Activated CD4-positive, alpha-beta T cell treated with anti-CD3 and anti-CD28 coated beads for 36 hours (primary cell): ENCODE measurements at regions of chr1 and their contacts with region 1.

Region 1: DNA sequence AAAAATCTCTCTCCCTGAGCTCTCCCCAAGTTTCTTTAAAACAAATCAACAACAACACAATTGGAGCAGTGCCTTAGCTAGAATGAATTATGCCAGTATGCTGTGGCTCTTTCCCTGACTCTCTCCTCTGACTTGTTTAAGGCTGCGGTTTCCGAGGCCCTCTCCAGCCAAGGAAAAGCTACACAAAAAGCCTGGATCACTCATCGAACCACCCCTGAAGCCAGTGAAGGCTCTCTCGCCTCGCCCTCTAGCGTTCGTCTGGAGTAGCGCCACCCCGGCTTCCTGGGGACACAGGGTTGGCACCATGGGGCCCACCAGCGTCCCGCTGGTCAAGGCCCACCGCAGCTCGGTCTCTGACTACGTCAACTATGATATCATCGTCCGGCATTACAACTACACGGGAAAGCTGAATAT is 1.9 kb downstream of the S1PR1 start:
- DNase-seq: peak; percentile 95
- ATAC-seq: peak; percentile 30
- H3K4me3 Mint-ChIP-seq: peak overlapping the region; percentile 89
- H3K27ac Mint-ChIP-seq: peak overlapping the region; percentile 99
- H3K4me1 Mint-ChIP-seq: peaks cover 51% of the 10 kb centered on the region
- H3K27me3 Mint-ChIP-seq: no peaks in the 10 kb centered on the region

Region 2: DNA sequence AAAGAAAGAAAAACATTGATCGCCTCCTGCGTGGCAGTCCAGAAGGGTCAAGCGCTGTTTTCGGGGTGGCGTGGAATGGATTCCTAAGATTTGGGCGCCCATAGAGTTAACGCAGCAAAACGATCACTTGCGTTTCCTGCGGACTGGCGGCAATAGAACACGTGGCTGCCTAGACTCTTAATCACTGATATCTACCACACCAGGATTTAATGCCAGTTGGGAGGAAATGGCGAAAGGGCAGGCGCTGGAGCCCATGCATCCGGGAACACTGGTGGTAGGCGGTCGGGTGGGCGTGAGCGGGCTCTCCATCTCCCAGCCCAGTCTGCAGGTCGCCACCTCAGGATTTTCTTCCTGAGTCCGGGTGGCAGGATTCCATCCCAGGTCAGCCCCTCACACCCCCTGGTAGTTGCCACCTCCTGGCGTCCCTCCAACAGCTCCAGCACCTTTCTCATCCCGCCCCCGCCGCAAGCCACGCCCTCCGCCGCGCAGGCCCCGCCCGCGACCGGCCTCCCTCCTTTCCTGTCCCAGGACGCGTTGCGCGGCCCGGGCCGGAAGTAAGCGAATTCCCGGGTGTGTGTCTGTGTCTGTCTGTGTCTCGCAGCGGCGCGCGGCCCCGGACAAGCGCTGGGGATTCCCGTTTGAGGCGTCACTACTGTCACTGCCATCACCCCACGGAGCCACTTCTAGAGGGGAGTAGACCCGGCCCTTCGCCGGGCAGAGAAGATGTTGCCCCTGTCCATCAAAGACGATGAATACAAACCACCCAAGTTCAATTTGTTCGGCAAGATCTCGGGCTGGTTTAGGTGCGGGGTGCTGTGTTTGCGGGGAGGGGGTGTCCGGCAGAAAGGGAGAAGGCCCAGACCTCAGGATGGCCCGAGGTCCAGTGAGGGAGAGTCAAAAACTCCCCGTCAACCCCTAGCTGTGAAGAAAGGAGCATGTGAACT is 342.9 kb before region 1 on chr1 and contains the start of gene SLC30A7:
- CTCF ChIA-PET with region 1: no interaction called
- POLR2A ChIA-PET with region 1: interaction called, 3 read pairs
- intact Hi-C with region 1: loop called (anchors 1 to 2 kb)
- DNase-seq: peak; percentile 98
- ATAC-seq: peak; percentile 81
- H3K4me3 Mint-ChIP-seq: peak within 1 kb of the TSS; percentile 100
- H3K27ac Mint-ChIP-seq: peak within 1 kb of the TSS; percentile 100
- H3K4me1 Mint-ChIP-seq: peaks cover 44% of the 10 kb centered on the region
- H3K27me3 Mint-ChIP-seq: no peaks in the 10 kb centered on the region
- total RNA-seq, gene SLC30A7: 33.2 to 34.6 TPM

Region 3: GRCh38 chr1:101002551-101002950 is 236.1 kb before region 1 on chr1:
- CTCF ChIA-PET with region 1: no interaction called
- POLR2A ChIA-PET with region 1: no interaction called
- intact Hi-C with region 1: loop called in 1 of 2 experiments (anchors 5 kb)
- DNase-seq: no peak
- ATAC-seq: no peak
- H3K4me3 Mint-ChIP-seq: no peak overlapping the region
- H3K27ac Mint-ChIP-seq: no peak overlapping the region
- H3K4me1 Mint-ChIP-seq: peaks cover 50% of the 10 kb centered on the region
- H3K27me3 Mint-ChIP-seq: no peaks in the 10 kb centered on the region

Region 4: GRCh38 chr1:101130673-101131072 is 108.0 kb before region 1 on chr1:
- CTCF ChIA-PET with region 1: interaction called, 28 read pairs
- POLR2A ChIA-PET with region 1: interaction called, 4 read pairs
- intact Hi-C with region 1: no loop called
- DNase-seq: no peak
- ATAC-seq: no peak
- H3K4me3 Mint-ChIP-seq: no peak overlapping the region
- H3K27ac Mint-ChIP-seq: no peak overlapping the region
- H3K4me1 Mint-ChIP-seq: peaks cover 68% of the 10 kb centered on the region
- H3K27me3 Mint-ChIP-seq: no peaks in the 10 kb centered on the region

Region 5: DNA sequence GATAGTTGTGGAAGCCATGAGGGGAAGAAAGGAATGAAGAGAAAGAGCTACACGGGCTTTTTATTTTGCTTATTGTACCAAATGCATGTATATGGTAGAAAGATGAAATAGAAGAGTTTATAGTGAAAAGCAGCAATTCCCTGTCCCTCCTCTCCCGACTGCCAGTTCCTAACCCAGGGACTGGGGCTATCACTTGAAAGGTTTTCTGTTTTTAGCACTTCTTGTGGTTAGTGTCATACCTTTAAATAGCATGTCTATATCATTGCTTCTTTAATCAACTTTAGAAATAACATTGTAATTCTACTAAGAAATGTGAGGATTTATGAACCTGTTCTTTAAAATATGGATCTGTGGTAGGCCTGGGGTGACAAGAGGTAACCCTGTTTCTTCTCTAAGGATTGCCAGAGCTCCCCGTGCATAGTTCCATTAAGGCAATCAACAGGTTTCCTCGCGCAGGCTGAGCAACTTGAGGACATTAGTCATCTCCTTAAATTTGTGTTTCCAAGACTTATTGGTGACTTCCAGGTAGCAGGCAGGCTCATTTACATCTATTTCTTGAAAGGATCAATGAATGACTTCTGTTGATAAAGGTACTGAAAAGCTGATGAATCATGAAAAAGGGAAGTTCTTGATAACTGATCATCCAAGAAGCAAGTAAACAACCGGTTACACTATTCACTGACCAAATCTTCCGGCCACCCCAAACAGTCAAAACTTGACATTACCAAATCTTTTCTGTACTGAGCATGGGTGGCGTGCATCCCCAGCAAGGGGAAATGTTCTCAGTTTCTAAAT is 39.6 kb before region 1 on chr1:
- CTCF ChIA-PET with region 1: interaction called, 14 read pairs
- POLR2A ChIA-PET with region 1: interaction called, 48 read pairs
- intact Hi-C with region 1: loop called (anchors 1 kb)
- DNase-seq: peak; percentile 79
- ATAC-seq: peak; percentile 86
- H3K4me3 Mint-ChIP-seq: no peak overlapping the region
- H3K27ac Mint-ChIP-seq: peak overlapping the region; percentile 85
- H3K4me1 Mint-ChIP-seq: peaks cover 35% of the 10 kb centered on the region
- H3K27me3 Mint-ChIP-seq: no peaks in the 10 kb centered on the region

Region 6: GRCh38 chr1:101282314-101283038 is 43.8 kb after region 1 on chr1:
- CTCF ChIA-PET with region 1: interaction called, 37 read pairs
- POLR2A ChIA-PET with region 1: interaction called, 3 read pairs
- intact Hi-C with region 1: loop called in 1 of 2 experiments (anchors 1 kb)
- DNase-seq: no peak
- ATAC-seq: no peak
- H3K4me3 Mint-ChIP-seq: no peak overlapping the region
- H3K27ac Mint-ChIP-seq: peak overlapping the region; percentile 95
- H3K4me1 Mint-ChIP-seq: peaks cover 93% of the 10 kb centered on the region
- H3K27me3 Mint-ChIP-seq: no peaks in the 10 kb centered on the region

Region 7: GRCh38 chr1:101349341-101349740 is 110.7 kb after region 1 on chr1:
- CTCF ChIA-PET with region 1: no interaction called
- POLR2A ChIA-PET with region 1: no interaction called
- intact Hi-C with region 1: no loop called
- DNase-seq: no peak
- ATAC-seq: no peak
- H3K4me3 Mint-ChIP-seq: no peak overlapping the region
- H3K27ac Mint-ChIP-seq: no peak overlapping the region
- H3K4me1 Mint-ChIP-seq: peaks cover 30% of the 10 kb centered on the region
- H3K27me3 Mint-ChIP-seq: no peaks in the 10 kb centered on the region

Region 8: DNA sequence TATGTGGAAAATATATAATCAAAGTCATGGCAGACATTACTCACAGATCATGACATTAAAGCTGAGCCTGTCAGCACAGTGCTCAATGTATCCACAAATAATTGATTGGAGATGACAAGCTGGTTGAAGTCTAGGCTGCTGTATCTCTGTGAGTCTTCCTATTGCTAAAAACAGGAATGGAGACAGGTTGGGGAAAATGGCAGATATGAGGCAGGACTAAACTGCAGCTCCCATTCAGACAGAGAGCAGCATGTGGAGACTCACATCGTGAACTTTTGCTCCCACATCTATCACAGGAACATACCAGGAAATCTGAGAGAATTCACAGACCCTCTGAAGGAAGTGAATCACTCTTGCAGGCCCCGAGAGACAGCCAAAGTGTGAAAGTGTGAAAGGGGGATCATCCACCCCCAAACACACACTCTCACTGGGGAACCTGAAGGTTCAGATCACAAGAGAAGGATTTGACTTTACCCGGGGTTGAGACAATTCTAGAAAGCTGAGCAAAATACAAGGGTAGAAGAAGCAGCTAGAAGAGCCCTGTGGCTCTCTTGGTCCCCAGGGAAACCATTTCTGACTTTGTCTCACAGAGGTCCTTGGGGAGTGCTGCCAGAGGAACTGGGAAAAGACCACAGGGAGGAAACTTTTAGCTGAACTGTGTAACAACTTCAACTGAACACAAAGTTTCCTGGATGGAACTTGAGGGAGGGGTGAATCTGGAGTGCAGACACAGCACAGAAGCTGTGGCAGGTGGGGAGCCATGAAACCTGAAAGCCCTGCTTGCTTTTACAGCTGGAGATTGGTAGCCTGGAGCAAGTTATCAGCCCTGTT is 171.6 kb after region 1 on chr1:
- CTCF ChIA-PET with region 1: no interaction called
- POLR2A ChIA-PET with region 1: no interaction called
- intact Hi-C with region 1: no loop called
- DNase-seq: peak; percentile 16
- ATAC-seq: peak; percentile 74
- H3K4me3 Mint-ChIP-seq: no peak overlapping the region
- H3K27ac Mint-ChIP-seq: no peak overlapping the region
- H3K4me1 Mint-ChIP-seq: peaks cover 10% of the 10 kb centered on the region
- H3K27me3 Mint-ChIP-seq: peaks cover 3% of the 10 kb centered on the region